ENCODE measurements at regions of chr2 and their contacts with region 1.

Region 1: GRCh38 chr2:175187378-175187777 is 5.9 kb upstream of the ATP5MC3 start:
- DNase-seq: peak in 2 of 9 experiments; percentile 24 to 40
- ATAC-seq: peak; percentile 68
- H3K4me3 ChIP-seq: no peak overlapping the region
- H3K4me3 Mint-ChIP-seq: no peak overlapping the region
- H3K27ac ChIP-seq: no peak overlapping the region
- H3K27ac Mint-ChIP-seq: no peak overlapping the region
- H3K4me1 ChIP-seq: no peaks in the 10 kb centered on the region
- H3K4me1 Mint-ChIP-seq: no peaks in the 10 kb centered on the region
- H3K27me3 ChIP-seq: no peaks in the 10 kb centered on the region
- H3K27me3 Mint-ChIP-seq: peaks cover 14% of the 10 kb centered on the region
- CTCF ChIP-seq: peak; percentile 11

Region 2: GRCh38 chr2:175036582-175037018 is 150.8 kb before region 1 on chr2:
- CTCF ChIA-PET with region 1: no interaction called
- POLR2A ChIA-PET with region 1: no interaction called
- intact Hi-C with region 1: loop called (anchors 5 to 10 kb)
- DNase-seq: peak in 2 of 9 experiments; percentile 46 to 64
- ATAC-seq: peak; percentile 75
- H3K4me3 ChIP-seq: no peak overlapping the region
- H3K4me3 Mint-ChIP-seq: peak overlapping the region; percentile 70
- H3K27ac ChIP-seq: no peak overlapping the region
- H3K27ac Mint-ChIP-seq: no peak overlapping the region
- H3K4me1 ChIP-seq: no peaks in the 10 kb centered on the region
- H3K4me1 Mint-ChIP-seq: peaks cover 10% of the 10 kb centered on the region
- H3K27me3 ChIP-seq: no peaks in the 10 kb centered on the region
- H3K27me3 Mint-ChIP-seq: no peaks in the 10 kb centered on the region
- CTCF ChIP-seq: peak; percentile 55

Region 3: GRCh38 chr2:175111200-175111657 is 76.1 kb before region 1 on chr2:
- CTCF ChIA-PET with region 1: interaction called, 3 read pairs
- POLR2A ChIA-PET with region 1: no interaction called
- intact Hi-C with region 1: loop called (anchors 1 to 2 kb)
- DNase-seq: peak in 2 of 9 experiments; percentile 53 to 67
- ATAC-seq: peak; percentile 72
- H3K4me3 ChIP-seq: no peak overlapping the region
- H3K4me3 Mint-ChIP-seq: no peak overlapping the region
- H3K27ac ChIP-seq: no peak overlapping the region
- H3K27ac Mint-ChIP-seq: peak overlapping the region; percentile 33
- H3K4me1 ChIP-seq: no peaks in the 10 kb centered on the region
- H3K4me1 Mint-ChIP-seq: no peaks in the 10 kb centered on the region
- H3K27me3 ChIP-seq: no peaks in the 10 kb centered on the region
- H3K27me3 Mint-ChIP-seq: no peaks in the 10 kb centered on the region
- CTCF ChIP-seq: peak; percentile 97

Region 4: DNA sequence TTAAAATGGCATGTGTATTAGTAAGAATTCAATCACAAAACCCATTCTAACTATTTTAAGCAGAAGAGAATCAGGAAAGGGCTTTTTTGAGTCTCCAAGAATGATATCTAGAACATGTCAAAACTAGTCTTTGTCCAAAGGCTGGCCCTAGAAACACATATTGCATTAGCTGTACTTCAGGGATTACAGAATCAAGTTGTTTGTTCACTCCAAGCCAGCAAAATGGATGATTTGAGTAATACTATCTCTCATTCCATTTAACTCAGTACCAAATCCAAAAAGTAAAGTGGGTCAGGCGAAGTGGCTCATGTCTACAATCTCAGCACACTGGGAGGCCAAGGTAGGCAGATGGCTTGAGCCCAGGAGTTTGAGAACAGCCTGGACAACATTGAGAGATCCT is 60.7 kb before region 1 on chr2:
- CTCF ChIA-PET with region 1: no interaction called
- POLR2A ChIA-PET with region 1: no interaction called
- intact Hi-C with region 1: no loop called
- DNase-seq: no peak
- ATAC-seq: no peak
- H3K4me3 ChIP-seq: no peak overlapping the region
- H3K4me3 Mint-ChIP-seq: no peak overlapping the region
- H3K27ac ChIP-seq: no peak overlapping the region
- H3K27ac Mint-ChIP-seq: no peak overlapping the region
- H3K4me1 ChIP-seq: no peaks in the 10 kb centered on the region
- H3K4me1 Mint-ChIP-seq: peaks cover 28% of the 10 kb centered on the region
- H3K27me3 ChIP-seq: no peaks in the 10 kb centered on the region
- H3K27me3 Mint-ChIP-seq: no peaks in the 10 kb centered on the region
- CTCF ChIP-seq: no peak

Region 5: GRCh38 chr2:175236930-175237329 is 49.6 kb after region 1 on chr2:
- CTCF ChIA-PET with region 1: no interaction called
- POLR2A ChIA-PET with region 1: no interaction called
- intact Hi-C with region 1: no loop called
- DNase-seq: no peak
- ATAC-seq: no peak
- H3K4me3 ChIP-seq: no peak overlapping the region
- H3K4me3 Mint-ChIP-seq: no peak overlapping the region
- H3K27ac ChIP-seq: no peak overlapping the region
- H3K27ac Mint-ChIP-seq: no peak overlapping the region
- H3K4me1 ChIP-seq: no peaks in the 10 kb centered on the region
- H3K4me1 Mint-ChIP-seq: no peaks in the 10 kb centered on the region
- H3K27me3 ChIP-seq: no peaks in the 10 kb centered on the region
- H3K27me3 Mint-ChIP-seq: peaks cover 19% of the 10 kb centered on the region
- CTCF ChIP-seq: no peak

Region 6: DNA sequence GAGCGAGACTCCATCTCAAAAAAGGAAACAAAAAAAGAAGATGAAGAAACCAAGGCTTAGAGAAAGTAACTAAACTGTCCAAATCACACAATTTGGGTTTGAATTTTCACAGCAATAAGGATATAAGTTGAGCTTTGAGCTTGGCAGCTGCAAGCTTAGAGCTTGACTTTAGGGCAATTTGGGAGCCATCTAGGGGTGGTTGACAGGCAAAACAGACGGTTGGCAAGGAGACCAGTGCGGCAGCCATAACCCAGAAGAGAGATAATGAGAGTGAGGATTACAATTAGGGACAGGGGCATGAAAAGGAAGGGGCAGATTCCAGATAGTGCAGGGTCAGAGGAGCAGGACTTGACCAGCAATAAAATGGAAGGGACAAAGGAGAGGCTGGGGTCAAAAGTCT is 1643.0 kb after region 1 on chr2:
- CTCF ChIA-PET with region 1: no interaction called
- POLR2A ChIA-PET with region 1: no interaction called
- intact Hi-C with region 1: no loop called
- DNase-seq: peak in 5 of 9 experiments; percentile 41 to 68 (median 56)
- ATAC-seq: peak; percentile 53
- H3K4me3 ChIP-seq: no peak overlapping the region
- H3K4me3 Mint-ChIP-seq: no peak overlapping the region
- H3K27ac ChIP-seq: no peak overlapping the region
- H3K27ac Mint-ChIP-seq: no peak overlapping the region
- H3K4me1 ChIP-seq: peaks cover 31% of the 10 kb centered on the region
- H3K4me1 Mint-ChIP-seq: peaks cover 43% of the 10 kb centered on the region
- H3K27me3 ChIP-seq: no peaks in the 10 kb centered on the region
- H3K27me3 Mint-ChIP-seq: no peaks in the 10 kb centered on the region
- CTCF ChIP-seq: no peak

Measured in CD8-positive, alpha-beta T cell (primary cell).